BJ (cell line): ENCODE measurements at regions of chr12 and their contacts with region 1.

Region 1: GRCh38 chr12:130953771-130954543 is at the start of gene ADGRD1:
- DNase-seq: no peak
- H3K4me3 ChIP-seq: peak within 1 kb of the TSS; percentile 63
- H3K27me3 ChIP-seq: no peaks in the 10 kb centered on the region
- CTCF ChIP-seq: no peak
- polyA plus RNA-seq, gene ADGRD1: 40.1 and 68.5 TPM in 2 replicates

Region 2: GRCh38 chr12:130932061-130932930 is 21.7 kb before region 1 on chr12:
- CTCF ChIA-PET with region 1: interaction called, 3 read pairs
- POLR2A ChIA-PET with region 1: interaction called, 10 read pairs
- DNase-seq: peak; percentile 87
- H3K4me3 ChIP-seq: 0 out of 2 replicates have a peak overlapping the region, but pooled peaks have one; percentile 2
- H3K27me3 ChIP-seq: no peaks in the 10 kb centered on the region
- CTCF ChIP-seq: no peak